ENCODE measurements at regions of chr7 and their contacts with region 1.

Region 1: GRCh38 chr7:158704704-158705468 is at the start of gene NCAPG2:
- DNase-seq: peak; percentile 98
- H3K4me3 ChIP-seq: peak within 1 kb of the TSS; percentile 99
- H3K4me3 Mint-ChIP-seq: peak within 1 kb of the TSS; percentile 87
- H3K27ac Mint-ChIP-seq: peak within 1 kb of the TSS; percentile 88
- H3K4me1 ChIP-seq: peaks cover 12% of the 10 kb centered on the region
- H3K4me1 Mint-ChIP-seq: peaks cover 24% of the 10 kb centered on the region
- H3K27me3 ChIP-seq: no peaks in the 10 kb centered on the region
- H3K27me3 Mint-ChIP-seq: no peaks in the 10 kb centered on the region
- CTCF ChIP-seq: peak; percentile 11 to 20
- total RNA-seq, gene NCAPG2: 67.3 and 67.6 TPM in 2 replicates

Region 2: GRCh38 chr7:158633055-158633956 is 71.6 kb before region 1 on chr7:
- CTCF ChIA-PET with region 1: no interaction called
- POLR2A ChIA-PET with region 1: no interaction called
- intact Hi-C with region 1: no loop called
- DNase-seq: no peak
- H3K4me3 ChIP-seq: no peak overlapping the region
- H3K4me3 Mint-ChIP-seq: no peak overlapping the region
- H3K27ac Mint-ChIP-seq: no peak overlapping the region
- H3K4me1 ChIP-seq: no peaks in the 10 kb centered on the region
- H3K4me1 Mint-ChIP-seq: no peaks in the 10 kb centered on the region
- H3K27me3 ChIP-seq: no peaks in the 10 kb centered on the region
- H3K27me3 Mint-ChIP-seq: no peaks in the 10 kb centered on the region
- CTCF ChIP-seq: no peak

Region 3: GRCh38 chr7:158646766-158647447 is 58.0 kb before region 1 on chr7:
- CTCF ChIA-PET with region 1: interaction called, 3 read pairs
- POLR2A ChIA-PET with region 1: no interaction called
- intact Hi-C with region 1: loop called (anchors 2 kb)
- DNase-seq: peak in 1 of 2 experiments; percentile 38
- H3K4me3 ChIP-seq: no peak overlapping the region
- H3K4me3 Mint-ChIP-seq: no peak overlapping the region
- H3K27ac Mint-ChIP-seq: peak overlapping the region; percentile 59
- H3K4me1 ChIP-seq: peaks cover 39% of the 10 kb centered on the region
- H3K4me1 Mint-ChIP-seq: peaks cover 26% of the 10 kb centered on the region
- H3K27me3 ChIP-seq: no peaks in the 10 kb centered on the region
- H3K27me3 Mint-ChIP-seq: no peaks in the 10 kb centered on the region
- CTCF ChIP-seq: peak; percentile 17 to 57

Region 4: GRCh38 chr7:158720112-158720511 is 15.2 kb after region 1 on chr7:
- CTCF ChIA-PET with region 1: no interaction called
- POLR2A ChIA-PET with region 1: interaction called, 17 read pairs
- intact Hi-C with region 1: no loop called
- DNase-seq: no peak
- H3K4me3 ChIP-seq: no peak overlapping the region
- H3K4me3 Mint-ChIP-seq: peak overlapping the region; percentile 54
- H3K27ac Mint-ChIP-seq: no peak overlapping the region
- H3K4me1 ChIP-seq: no peaks in the 10 kb centered on the region
- H3K4me1 Mint-ChIP-seq: no peaks in the 10 kb centered on the region
- H3K27me3 ChIP-seq: no peaks in the 10 kb centered on the region
- H3K27me3 Mint-ChIP-seq: peaks cover 14% of the 10 kb centered on the region
- CTCF ChIP-seq: no peak

Region 5: DNA sequence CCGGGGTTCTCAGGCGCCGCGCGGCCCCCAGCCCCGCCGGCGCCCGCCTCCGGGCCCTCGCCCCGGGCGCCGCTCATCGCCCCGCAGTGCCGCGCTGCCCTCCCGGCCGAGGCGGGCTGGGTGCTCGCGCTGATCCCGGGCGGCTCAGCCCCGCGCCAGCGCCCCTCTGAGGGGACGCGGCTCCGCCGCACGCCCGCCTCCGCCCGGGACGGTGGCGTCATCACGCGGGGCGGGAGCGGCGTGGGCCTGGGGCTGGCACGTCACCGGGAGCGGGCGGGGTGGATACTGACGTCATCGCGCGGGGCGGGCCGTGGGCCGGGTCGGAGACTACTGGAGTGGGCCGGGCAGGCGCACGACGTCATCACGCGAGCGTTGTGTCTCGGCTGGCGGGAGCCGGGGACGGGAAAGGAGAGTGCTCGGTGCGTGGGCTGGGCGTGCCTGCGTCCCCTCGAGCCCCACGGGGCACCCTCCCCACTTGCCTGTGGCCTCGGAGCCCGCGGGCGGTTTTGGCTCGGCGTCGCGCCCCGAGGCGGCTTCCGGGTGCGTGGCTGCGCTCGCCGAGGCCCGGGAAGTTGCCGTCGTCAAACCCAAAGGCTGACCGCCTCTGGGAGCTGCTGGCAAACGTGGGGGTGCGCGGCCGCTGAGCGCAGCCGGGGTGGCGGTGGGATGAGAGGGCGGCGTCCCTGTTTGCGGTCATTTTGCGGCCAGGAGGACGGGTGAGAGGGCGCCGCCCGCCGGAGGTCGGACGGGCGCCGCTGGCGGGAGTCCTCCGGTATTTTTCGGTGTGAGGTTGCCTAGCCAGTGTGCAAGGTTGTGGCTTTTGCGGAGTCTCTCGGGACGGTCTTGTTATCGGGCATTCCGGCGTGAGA is 124.7 kb after region 1 on chr7 and contains the start of gene ESYT2:
- CTCF ChIA-PET with region 1: interaction called, 4 read pairs
- POLR2A ChIA-PET with region 1: no interaction called
- intact Hi-C with region 1: loop called (anchors 1 kb)
- DNase-seq: peak; percentile 98 to 99
- H3K4me3 ChIP-seq: peak within 1 kb of the TSS; percentile 100
- H3K4me3 Mint-ChIP-seq: peak within 1 kb of the TSS; percentile 83
- H3K27ac Mint-ChIP-seq: peak within 1 kb of the TSS; percentile 79
- H3K4me1 ChIP-seq: peaks cover 9% of the 10 kb centered on the region; the same call in 1 of the 2 replicates
- H3K4me1 Mint-ChIP-seq: peaks cover 12% of the 10 kb centered on the region
- H3K27me3 ChIP-seq: no peaks in the 10 kb centered on the region
- H3K27me3 Mint-ChIP-seq: no peaks in the 10 kb centered on the region
- CTCF ChIP-seq: peak in 1 of 2 experiments; percentile 43
- total RNA-seq, gene ESYT2: 55.2 and 59.4 TPM in 2 replicates

Region 6: DNA sequence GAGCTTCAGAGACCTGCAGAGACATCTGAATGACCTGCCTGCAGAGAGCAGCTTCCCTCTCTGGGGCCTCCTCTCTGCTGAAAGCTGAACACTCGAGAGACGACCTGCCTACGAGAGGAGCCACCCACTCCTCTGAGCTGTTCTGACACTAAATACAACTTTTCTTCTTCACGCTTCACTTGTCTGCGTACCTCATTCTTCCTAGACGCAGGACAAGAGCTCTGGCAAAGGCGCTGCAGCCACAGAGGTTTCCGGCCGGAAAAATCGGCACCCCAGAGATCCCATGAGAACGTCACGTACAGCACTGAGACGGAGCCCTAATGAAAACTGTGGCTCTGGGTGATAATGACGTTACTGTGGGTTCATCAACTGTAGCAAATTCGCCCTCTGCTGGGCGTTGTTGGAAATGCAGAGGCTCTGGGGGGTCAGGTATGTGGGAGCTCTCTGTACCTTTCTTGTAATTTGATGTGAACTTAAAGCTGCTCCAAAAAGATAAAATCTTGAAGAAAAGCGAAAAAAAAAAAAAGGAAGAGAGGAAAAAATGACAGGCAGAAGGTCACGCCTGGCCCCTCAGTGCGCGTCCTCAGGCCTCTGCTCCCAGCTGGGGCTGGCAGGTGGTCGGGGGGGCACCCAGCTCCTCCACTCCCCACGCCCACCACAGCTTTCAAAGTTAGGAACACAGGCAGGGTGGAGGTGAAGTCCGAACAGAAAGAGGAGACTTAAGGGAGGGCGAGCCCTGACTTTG is 272.1 kb after region 1 on chr7:
- CTCF ChIA-PET with region 1: interaction called, 3 read pairs
- POLR2A ChIA-PET with region 1: no interaction called
- intact Hi-C with region 1: loop called (anchors 2 kb)
- DNase-seq: peak; percentile 77 to 84
- H3K4me3 ChIP-seq: peak overlapping the region; percentile 31
- H3K4me3 Mint-ChIP-seq: peak overlapping the region; percentile 77
- H3K27ac Mint-ChIP-seq: peak overlapping the region; percentile 71
- H3K4me1 ChIP-seq: no peaks in the 10 kb centered on the region
- H3K4me1 Mint-ChIP-seq: peaks cover 7% of the 10 kb centered on the region
- H3K27me3 ChIP-seq: no peaks in the 10 kb centered on the region
- H3K27me3 Mint-ChIP-seq: no peaks in the 10 kb centered on the region
- CTCF ChIP-seq: peak; percentile 78 to 80